Prostate gland (tissue), 2 donors: ENCODE measurements at regions of chr20 and their contacts with region 1.

Region 1: DNA sequence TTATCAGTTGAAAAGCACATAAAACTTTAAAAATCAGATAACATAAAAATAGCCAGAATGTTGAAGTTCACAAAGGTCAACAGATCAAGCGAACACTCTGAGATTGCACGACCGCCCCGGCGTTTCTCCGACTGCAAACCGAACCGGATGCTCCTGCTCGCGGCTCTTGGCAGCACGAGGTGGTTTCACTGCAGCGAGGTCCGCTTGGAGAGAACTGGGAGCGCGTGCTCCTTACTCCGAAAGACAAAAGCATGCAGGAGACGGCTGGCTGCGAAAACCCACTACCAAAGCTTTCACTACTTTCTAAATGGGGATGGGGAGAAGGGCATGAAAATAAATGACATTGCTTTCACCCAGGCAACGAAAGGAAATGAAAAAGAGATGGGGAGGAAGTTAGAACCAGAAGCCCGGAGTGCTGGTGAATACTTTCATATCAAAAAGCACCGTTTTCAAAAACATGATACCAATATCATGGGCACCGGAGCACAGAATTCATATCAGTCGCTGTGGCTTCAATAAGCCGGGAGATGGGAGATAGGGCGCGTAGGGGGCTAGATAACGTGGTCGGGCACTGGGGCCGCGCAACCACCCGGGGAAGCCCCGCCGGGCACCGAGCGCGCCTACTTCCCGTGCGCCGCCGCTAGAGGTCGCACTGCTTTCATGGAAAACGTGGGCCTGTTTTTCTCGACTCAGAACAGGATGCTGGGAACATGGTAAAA is 8.3 kb upstream of the ANKRD60 start:
- DNase-seq: peak; percentile 56
- H3K4me3 ChIP-seq: peak overlapping the region; percentile 20 to 31
- H3K27ac ChIP-seq: no peak overlapping the region
- H3K4me1 ChIP-seq: no peaks in the 10 kb centered on the region
- H3K27me3 ChIP-seq: no peaks in the 10 kb centered on the region
- CTCF ChIP-seq: peak; percentile 89 to 94 (median 92)
- POLR2A ChIP-seq: no peak

Region 2: GRCh38 chr20:58150772-58151171 is 86.0 kb before region 1 on chr20:
- intact Hi-C with region 1: no loop called
- DNase-seq: peak; percentile 65
- H3K4me3 ChIP-seq: no peak overlapping the region
- H3K27ac ChIP-seq: no peak overlapping the region
- H3K4me1 ChIP-seq: peaks cover 7% of the 10 kb centered on the region
- H3K27me3 ChIP-seq: no peaks in the 10 kb centered on the region
- CTCF ChIP-seq: no peak
- POLR2A ChIP-seq: no peak

Region 3: DNA sequence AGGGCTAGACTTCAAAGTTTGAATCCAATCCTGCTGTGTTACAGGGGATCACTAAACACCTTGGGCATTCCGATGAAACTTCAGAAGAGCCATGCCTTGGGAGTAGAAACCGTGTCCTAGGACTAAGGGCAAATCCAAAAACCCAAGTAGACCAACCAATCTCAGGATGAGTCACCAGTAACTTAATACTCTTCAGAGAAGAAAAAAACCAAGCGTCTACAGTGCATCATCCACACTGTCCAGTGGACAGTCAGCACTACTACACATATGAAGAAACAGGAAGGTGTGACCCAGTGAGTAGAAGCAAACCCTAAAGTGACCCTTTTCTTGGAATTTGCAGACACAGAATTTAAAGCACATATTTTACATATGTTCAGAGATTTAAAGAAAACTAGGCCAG is 112.8 kb after region 1 on chr20:
- intact Hi-C with region 1: no loop called
- DNase-seq: no peak
- H3K4me3 ChIP-seq: no peak overlapping the region
- H3K27ac ChIP-seq: no peak overlapping the region
- H3K4me1 ChIP-seq: no peaks in the 10 kb centered on the region
- H3K27me3 ChIP-seq: no peaks in the 10 kb centered on the region
- CTCF ChIP-seq: no peak
- POLR2A ChIP-seq: no peak

Region 4: GRCh38 chr20:58447511-58448391 is 211.0 kb after region 1 on chr20:
- intact Hi-C with region 1: loop called (anchors 5 kb)
- DNase-seq: peak; percentile 25
- H3K4me3 ChIP-seq: no peak overlapping the region
- H3K27ac ChIP-seq: no peak overlapping the region
- H3K4me1 ChIP-seq: no peaks in the 10 kb centered on the region
- H3K27me3 ChIP-seq: no peaks in the 10 kb centered on the region
- CTCF ChIP-seq: peak in 3 of 4 experiments; percentile 33 to 60 (median 40)
- POLR2A ChIP-seq: no peak

Region 5: DNA sequence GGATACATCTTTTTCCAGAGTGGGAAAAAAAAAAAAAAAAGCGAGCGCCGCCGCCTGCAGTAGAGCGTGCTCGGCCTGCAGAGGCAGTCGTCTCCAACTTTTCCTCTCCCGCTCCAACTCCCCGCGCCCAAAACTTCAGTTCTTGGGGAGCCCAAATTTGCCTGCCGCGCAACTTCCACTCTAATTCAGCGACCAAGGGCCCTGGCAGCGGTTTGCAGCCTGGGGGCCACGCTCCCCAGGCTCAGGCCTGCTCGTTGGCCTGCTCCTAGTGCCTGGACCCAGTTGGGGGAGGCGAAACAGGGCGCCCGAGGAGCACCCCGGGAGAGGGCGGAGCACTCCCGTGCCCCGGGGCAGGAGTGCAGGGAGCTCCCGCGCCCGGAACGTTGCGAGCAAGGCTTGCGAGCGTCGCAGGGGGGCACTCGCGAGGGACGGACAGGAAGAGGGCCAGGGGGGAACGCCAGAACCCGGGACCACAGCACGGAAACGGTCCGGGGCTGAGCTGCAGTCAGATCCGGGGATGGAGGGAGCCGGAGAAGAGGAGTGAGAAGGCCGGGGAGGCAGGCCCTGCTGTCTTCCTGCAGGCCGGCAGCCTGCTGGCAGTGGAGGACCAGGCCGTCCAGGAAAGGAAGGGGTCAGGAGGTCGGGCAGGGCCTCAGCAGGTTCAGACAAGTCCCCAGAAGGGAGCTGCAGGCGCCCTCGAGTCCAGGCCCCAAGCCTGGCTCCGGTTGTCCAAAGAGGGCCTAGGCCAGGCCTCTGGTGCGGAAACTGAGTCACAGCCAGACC is 414.2 kb after region 1 on chr20 and contains the start of gene STX16:
- intact Hi-C with region 1: loop called (anchors 5 kb)
- DNase-seq: peak; percentile 80
- H3K4me3 ChIP-seq: peak within 1 kb of the TSS; percentile 77 to 89
- H3K27ac ChIP-seq: peak within 1 kb of the TSS; percentile 92
- H3K4me1 ChIP-seq: peaks cover 16% of the 10 kb centered on the region
- H3K27me3 ChIP-seq: no peaks in the 10 kb centered on the region
- CTCF ChIP-seq: peak in 3 of 4 experiments; percentile 47 to 58 (median 58)
- POLR2A ChIP-seq: peak; percentile 68
- total RNA-seq, gene STX16: 34.3 to 115 TPM

Region 6: DNA sequence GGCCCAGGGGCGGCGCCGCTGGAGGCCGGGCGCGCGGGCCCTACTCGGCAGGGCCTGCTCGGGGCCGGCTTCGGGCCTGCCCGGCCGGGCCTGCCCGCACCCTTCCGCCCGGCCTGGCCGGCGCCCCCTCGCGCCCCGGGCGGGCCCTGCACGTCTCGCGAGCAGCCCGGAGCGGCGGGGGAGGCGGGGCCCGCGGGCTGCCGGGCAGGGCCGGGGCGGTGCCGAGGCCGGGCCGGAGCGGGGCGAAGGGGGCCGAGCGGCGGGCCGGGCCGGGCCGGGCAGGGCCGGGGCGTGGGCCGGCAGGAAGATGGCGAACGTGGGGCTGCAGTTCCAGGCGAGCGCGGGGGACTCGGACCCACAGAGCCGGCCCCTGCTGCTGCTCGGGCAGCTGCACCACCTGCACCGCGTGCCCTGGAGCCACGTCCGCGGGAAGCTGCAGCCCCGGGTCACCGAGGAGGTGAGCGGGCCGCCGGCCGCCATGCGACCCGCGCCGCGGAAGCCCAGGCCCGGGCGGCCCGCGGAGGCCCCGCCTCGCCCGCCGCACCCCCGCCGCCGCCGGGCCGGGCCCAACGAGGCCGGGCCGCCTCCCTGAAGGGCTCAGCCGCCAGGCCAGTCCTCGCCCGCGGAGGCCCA is 455.9 kb after region 1 on chr20 and contains the start of gene NPEPL1:
- intact Hi-C with region 1: loop called (anchors 10 kb)
- DNase-seq: peak; percentile 44
- H3K4me3 ChIP-seq: peak within 1 kb of the TSS; percentile 39 to 41
- H3K27ac ChIP-seq: peak within 1 kb of the TSS; percentile 68 to 74
- H3K4me1 ChIP-seq: peaks cover 8% of the 10 kb centered on the region
- H3K27me3 ChIP-seq: no peaks in the 10 kb centered on the region
- CTCF ChIP-seq: peak in 1 of 4 experiments; percentile 30
- POLR2A ChIP-seq: no peak
- total RNA-seq, gene NPEPL1: 25.7 to 63.1 TPM

Region 7: GRCh38 chr20:58850693-58851174 is 614.0 kb after region 1 on chr20 and contains the start of gene GNAS-AS1:
- intact Hi-C with region 1: loop called (anchors 5 kb)
- DNase-seq: peak; percentile 49
- H3K4me3 ChIP-seq: peak within 1 kb of the TSS in 1 of 2 donors; percentile 9
- H3K27ac ChIP-seq: no peak within 1 kb of the TSS
- H3K4me1 ChIP-seq: no peaks in the 10 kb centered on the region
- H3K27me3 ChIP-seq: peaks cover 16% of the 10 kb centered on the region
- CTCF ChIP-seq: no peak
- POLR2A ChIP-seq: no peak
- total RNA-seq, gene GNAS-AS1: 0.50 to 1.8 TPM

Region 8: GRCh38 chr20:59222253-59223181 is 985.7 kb after region 1 on chr20:
- intact Hi-C with region 1: loop called (anchors 10 kb)
- DNase-seq: peak; percentile 65
- H3K4me3 ChIP-seq: peak overlapping the region; percentile 38 to 47
- H3K27ac ChIP-seq: peak overlapping the region in 1 of 2 donors; percentile 55
- H3K4me1 ChIP-seq: no peaks in the 10 kb centered on the region
- H3K27me3 ChIP-seq: no peaks in the 10 kb centered on the region
- CTCF ChIP-seq: peak; percentile 86 to 91 (median 88)
- POLR2A ChIP-seq: no peak